ENCODE measurements at regions of chr5 and their contacts with region 1.

Region 1: GRCh38 chr5:113606298-113607134 is 93.0 kb downstream of the YTHDC2 start:
- DNase-seq: peak in 1 of 2 experiments; percentile 35
- H3K4me3 ChIP-seq: no peak overlapping the region
- H3K27ac ChIP-seq: no peak overlapping the region
- H3K4me1 ChIP-seq: no peaks in the 10 kb centered on the region
- H3K27me3 ChIP-seq: no peaks in the 10 kb centered on the region
- CTCF ChIP-seq: peak; percentile 85

Region 2: DNA sequence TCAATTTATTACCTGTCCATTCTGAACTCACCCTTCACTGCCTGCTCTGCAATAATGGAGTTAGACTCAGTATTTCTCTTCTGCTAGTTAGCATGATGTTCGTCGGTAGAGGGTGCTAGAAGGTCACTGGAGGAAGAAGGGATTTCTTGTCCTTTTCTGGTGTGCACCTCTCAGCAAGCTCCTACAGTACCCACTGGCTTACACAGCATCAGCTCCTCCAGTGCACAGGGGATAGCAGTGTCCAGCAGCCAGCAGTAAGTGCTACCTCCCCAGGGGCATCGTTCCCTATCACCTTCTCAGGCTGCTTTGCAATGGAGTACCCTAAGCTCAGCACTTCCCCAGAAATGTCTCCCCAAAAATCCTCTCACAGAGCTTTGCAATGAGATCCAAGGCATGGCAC is 914.8 kb before region 1 on chr5:
- CTCF ChIA-PET with region 1: no interaction called
- POLR2A ChIA-PET with region 1: no interaction called
- intact Hi-C with region 1: loop called (anchors 5 kb)
- DNase-seq: peak; percentile 32 to 56
- H3K4me3 ChIP-seq: no peak overlapping the region
- H3K27ac ChIP-seq: no peak overlapping the region
- H3K4me1 ChIP-seq: no peaks in the 10 kb centered on the region
- H3K27me3 ChIP-seq: no peaks in the 10 kb centered on the region
- CTCF ChIP-seq: peak; percentile 67

Region 3: DNA sequence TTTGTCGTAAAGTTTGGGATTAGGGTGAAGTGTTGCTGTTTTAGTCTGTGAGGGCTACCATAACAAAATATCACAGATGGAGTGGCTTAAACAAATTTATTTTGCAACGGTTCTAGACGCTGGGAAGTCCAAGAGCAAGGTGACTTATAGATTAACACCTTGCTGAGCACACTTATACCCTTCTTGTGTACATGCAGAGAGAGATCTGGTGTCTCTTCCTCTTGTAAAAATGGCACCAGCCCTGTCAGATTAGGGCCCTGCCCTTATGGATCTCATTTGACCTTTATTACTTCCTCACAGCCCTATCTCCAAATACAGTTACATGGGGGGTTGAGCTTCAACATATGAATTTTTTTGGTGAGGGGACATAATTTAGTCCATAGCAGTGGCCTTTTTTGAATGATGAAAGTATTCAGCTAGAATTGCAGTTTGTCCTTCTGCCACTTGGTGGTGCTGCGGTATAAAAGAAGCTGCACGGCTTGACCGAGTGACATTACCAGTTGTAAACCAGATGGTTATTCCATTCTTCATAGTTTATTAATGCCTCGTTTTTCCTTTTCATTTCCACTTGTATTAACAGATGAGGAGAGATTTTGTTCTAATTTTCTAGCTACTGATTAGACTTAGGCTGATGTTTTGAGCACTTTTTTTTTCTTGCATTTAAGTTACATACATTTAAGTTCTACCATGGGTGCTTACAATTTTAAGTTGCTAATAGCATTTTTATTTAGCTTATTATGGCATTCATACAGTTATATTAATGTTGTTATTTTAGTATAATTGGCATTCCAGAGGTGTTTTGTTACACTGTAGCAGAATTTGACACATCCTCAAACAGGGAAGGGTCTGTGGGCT is 610.5 kb before region 1 on chr5:
- CTCF ChIA-PET with region 1: interaction called, 4 read pairs
- POLR2A ChIA-PET with region 1: no interaction called
- intact Hi-C with region 1: loop called (anchors 1 kb)
- DNase-seq: peak; percentile 39 to 60
- H3K4me3 ChIP-seq: no peak overlapping the region
- H3K27ac ChIP-seq: no peak overlapping the region
- H3K4me1 ChIP-seq: no peaks in the 10 kb centered on the region
- H3K27me3 ChIP-seq: no peaks in the 10 kb centered on the region
- CTCF ChIP-seq: peak; percentile 96

Region 4: DNA sequence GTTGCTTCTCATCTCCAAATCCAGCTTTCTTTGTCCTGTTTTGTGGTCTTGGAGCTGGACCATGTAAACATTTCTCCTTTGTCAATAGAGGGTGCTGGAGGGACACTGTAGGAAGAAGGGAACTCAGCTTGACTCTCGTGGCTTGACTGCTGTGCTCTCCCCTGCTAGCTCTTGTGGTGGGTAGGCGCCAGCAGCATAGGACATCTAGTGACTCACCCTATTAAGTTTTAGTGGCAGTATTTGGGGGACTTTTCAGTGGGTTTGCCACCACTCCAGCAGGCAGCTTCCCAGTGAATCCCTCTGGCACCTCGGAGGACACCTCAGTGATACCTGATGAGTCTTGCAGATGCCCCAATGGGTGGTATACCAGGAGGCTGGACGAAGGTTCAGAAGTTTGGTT is 269.5 kb before region 1 on chr5:
- CTCF ChIA-PET with region 1: no interaction called
- POLR2A ChIA-PET with region 1: no interaction called
- intact Hi-C with region 1: loop called (anchors 5 kb)
- DNase-seq: peak in 1 of 2 experiments; percentile 39
- H3K4me3 ChIP-seq: no peak overlapping the region
- H3K27ac ChIP-seq: no peak overlapping the region
- H3K4me1 ChIP-seq: no peaks in the 10 kb centered on the region
- H3K27me3 ChIP-seq: no peaks in the 10 kb centered on the region
- CTCF ChIP-seq: peak; percentile 53; the same call in 1 of the 2 replicates

Region 5: GRCh38 chr5:113378959-113379541 is 227.5 kb before region 1 on chr5:
- CTCF ChIA-PET with region 1: interaction called, 17 read pairs
- POLR2A ChIA-PET with region 1: no interaction called
- intact Hi-C with region 1: loop called (anchors 1 kb)
- DNase-seq: peak in 1 of 2 experiments; percentile 35
- H3K4me3 ChIP-seq: no peak overlapping the region
- H3K27ac ChIP-seq: no peak overlapping the region
- H3K4me1 ChIP-seq: no peaks in the 10 kb centered on the region
- H3K27me3 ChIP-seq: no peaks in the 10 kb centered on the region
- CTCF ChIP-seq: peak; percentile 86

Region 6: GRCh38 chr5:113572716-113573115 is 33.8 kb before region 1 on chr5:
- CTCF ChIA-PET with region 1: no interaction called
- POLR2A ChIA-PET with region 1: no interaction called
- intact Hi-C with region 1: no loop called
- DNase-seq: no peak
- H3K4me3 ChIP-seq: no peak overlapping the region
- H3K27ac ChIP-seq: no peak overlapping the region
- H3K4me1 ChIP-seq: no peaks in the 10 kb centered on the region
- H3K27me3 ChIP-seq: no peaks in the 10 kb centered on the region
- CTCF ChIP-seq: no peak